CD4-positive, alpha-beta T cell (primary cell): ENCODE measurements at regions of chrX and their contacts with region 1.

Region 1: DNA sequence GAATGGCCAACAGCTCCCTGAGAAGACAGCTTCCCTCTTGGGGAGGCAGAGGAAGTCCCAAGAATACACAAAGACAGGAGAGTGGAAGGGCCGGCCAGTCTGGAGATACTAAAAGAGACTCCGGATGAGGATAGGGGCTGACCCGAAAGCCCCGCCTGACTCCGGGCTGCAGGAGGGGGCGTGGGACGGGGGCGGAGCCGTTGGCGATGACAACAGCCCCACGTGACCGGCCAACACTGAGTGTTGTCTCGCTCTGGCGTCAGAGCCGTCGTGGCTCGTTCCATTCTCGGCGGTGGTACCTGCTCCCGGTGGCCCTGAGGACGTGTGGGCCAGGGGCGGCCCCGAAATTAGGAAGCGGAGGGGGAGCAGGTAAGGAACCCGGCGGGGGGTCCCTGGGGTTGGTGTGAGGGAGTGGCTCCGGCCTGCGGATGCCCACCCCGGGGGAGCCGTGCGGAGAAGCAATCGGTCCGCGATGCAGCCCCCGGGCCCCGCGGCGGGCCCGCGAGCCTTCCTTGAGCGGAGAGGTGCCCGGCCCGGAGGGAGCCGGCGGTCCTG is at the start of gene BEX4:
- DNase-seq: peak; percentile 54 to 90 (median 76)
- ATAC-seq: peak; percentile 87
- H3K4me3 ChIP-seq: peak within 1 kb of the TSS; percentile 65
- H3K4me3 Mint-ChIP-seq: peak within 1 kb of the TSS; percentile 94
- H3K27ac ChIP-seq: peak within 1 kb of the TSS; percentile 73 to 78
- H3K27ac Mint-ChIP-seq: peak within 1 kb of the TSS; percentile 90
- H3K4me1 ChIP-seq: peaks cover 12% of the 10 kb centered on the region
- H3K4me1 Mint-ChIP-seq: peaks cover 13% of the 10 kb centered on the region
- H3K27me3 ChIP-seq: no peaks in the 10 kb centered on the region
- H3K27me3 Mint-ChIP-seq: peaks cover 4% of the 10 kb centered on the region
- CTCF ChIP-seq: no peak
- total RNA-seq, gene BEX4: 60.8 to 61.0 TPM

Region 2: DNA sequence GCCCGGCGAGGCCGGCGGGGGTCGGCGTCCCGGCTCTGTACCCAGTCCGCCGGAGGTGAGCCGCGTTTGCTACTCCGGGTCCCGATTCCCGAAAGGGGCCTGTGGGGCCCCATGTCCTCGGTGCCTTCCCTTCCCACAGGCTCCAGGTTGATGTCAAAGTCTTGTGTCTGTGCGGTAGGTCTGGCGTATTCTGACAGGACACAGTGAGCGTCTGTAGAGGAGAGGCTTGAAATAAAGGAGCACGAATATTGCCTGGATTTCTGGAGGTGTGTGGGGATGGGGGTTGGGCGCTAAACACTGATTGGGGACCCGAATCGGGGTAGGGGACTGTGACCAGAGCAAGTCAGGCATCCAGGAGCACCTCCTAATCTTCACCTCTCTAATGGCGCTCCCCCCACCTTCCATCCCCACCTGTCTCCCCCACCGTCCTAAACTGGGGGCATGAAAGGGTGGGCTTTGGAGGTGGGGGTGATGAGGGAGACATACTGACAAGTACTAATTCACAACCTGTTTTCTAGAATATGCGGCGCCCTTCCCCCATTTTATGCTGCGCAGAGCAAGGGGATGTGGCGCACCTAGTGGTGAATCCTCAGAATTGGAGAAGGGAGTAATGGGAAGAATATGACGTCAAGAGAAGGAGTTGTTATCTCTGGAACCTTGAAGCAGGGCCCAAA is 501.9 kb before region 1 on chrX:
- CTCF ChIA-PET with region 1: no interaction called
- POLR2A ChIA-PET with region 1: no interaction called
- intact Hi-C with region 1: no loop called
- DNase-seq: peak in 4 of 14 experiments; percentile 11 to 38 (median 36)
- ATAC-seq: peak; percentile 64
- H3K4me3 ChIP-seq: peak overlapping the region; percentile 62
- H3K4me3 Mint-ChIP-seq: peak overlapping the region; percentile 93
- H3K27ac ChIP-seq: no peak overlapping the region
- H3K27ac Mint-ChIP-seq: peak overlapping the region; percentile 33
- H3K4me1 ChIP-seq: peaks cover 14% of the 10 kb centered on the region
- H3K4me1 Mint-ChIP-seq: peaks cover 30% of the 10 kb centered on the region
- H3K27me3 ChIP-seq: peaks cover 0 to 5% of the 10 kb centered on the region in 2 experiments
- H3K27me3 Mint-ChIP-seq: peaks cover 11% of the 10 kb centered on the region
- CTCF ChIP-seq: peak; percentile 34

Region 3: DNA sequence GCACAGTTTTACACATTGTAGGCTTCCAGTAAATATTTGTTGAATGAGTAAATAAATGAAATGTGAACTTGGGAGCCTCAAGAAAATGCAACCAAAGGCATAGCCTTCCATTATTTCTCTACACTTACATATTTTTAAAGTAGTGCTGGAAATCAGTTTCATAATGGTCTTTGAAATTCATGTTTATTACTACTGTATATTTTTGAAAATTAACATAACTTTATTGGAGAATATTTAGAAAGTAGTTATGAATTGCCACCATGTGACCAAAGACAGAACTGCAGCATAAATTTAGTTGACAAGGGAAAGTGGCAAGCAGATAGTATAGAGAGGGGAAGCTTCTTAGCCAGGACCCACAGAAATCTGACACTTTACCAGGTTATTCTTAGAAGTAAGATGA is 33.6 kb after region 1 on chrX:
- CTCF ChIA-PET with region 1: interaction called, 8 read pairs
- POLR2A ChIA-PET with region 1: interaction called, 3 read pairs
- intact Hi-C with region 1: loop called (anchors 1 kb)
- DNase-seq: peak in 4 of 14 experiments; percentile 13 to 47 (median 40)
- ATAC-seq: no peak
- H3K4me3 ChIP-seq: no peak overlapping the region
- H3K4me3 Mint-ChIP-seq: no peak overlapping the region
- H3K27ac ChIP-seq: no peak overlapping the region
- H3K27ac Mint-ChIP-seq: no peak overlapping the region
- H3K4me1 ChIP-seq: peaks cover under 1% of the 10 kb centered on the region
- H3K4me1 Mint-ChIP-seq: peaks cover 8% of the 10 kb centered on the region
- H3K27me3 ChIP-seq: no peaks in the 10 kb centered on the region
- H3K27me3 Mint-ChIP-seq: no peaks in the 10 kb centered on the region
- CTCF ChIP-seq: peak; percentile 46

Region 4: DNA sequence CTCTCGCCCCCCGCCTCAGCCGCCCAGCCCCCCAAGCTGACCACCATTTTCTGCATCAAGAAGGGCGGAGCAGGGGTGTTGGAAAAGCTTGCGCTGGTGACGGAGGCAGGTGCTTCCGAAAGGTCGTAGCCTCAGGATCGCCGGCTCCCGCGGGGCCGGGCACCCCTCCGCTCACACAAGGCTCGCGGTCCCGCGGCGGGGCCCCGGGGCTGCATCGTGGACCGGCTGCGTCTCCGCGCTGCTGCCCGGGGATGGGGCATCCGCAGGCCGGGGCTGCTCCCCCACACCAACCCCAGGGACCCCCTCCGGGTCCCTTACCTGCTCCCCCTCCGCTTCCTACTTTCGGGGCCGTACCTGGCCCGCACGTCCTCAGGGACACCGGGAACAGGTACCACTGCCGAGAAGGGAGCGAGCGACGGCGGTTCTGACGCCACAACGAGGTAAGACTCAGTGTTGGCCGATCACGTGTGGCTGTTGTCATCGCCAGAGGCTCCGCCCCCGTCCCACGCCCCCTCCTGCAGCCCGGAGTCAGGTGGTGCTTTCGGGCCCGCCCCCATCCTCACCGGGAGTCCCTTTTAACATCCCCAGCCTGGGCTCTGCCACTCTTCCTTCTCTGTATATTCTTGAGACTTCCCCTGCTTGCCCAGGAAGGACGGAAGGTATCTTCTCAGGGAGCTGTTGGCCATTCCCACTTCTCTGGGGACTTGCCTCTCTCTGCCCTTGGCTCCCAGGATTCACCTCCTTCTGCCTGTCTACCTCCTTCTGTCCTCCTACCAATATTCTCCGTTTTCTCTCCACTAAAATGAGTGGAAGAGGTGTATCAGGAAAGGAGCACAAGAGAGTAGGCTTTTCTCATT is 95.8 kb after region 1 on chrX and contains the start of gene BEX2:
- CTCF ChIA-PET with region 1: no interaction called
- POLR2A ChIA-PET with region 1: no interaction called
- intact Hi-C with region 1: loop called in 1 of 2 experiments (anchors 2 kb)
- DNase-seq: peak; percentile 71 to 92 (median 82)
- ATAC-seq: peak; percentile 99
- H3K4me3 ChIP-seq: peak within 1 kb of the TSS; percentile 63
- H3K4me3 Mint-ChIP-seq: peak within 1 kb of the TSS; percentile 89
- H3K27ac ChIP-seq: peak within 1 kb of the TSS in 1 of 2 donors; percentile 59
- H3K27ac Mint-ChIP-seq: peak within 1 kb of the TSS; percentile 71
- H3K4me1 ChIP-seq: peaks cover 9% of the 10 kb centered on the region
- H3K4me1 Mint-ChIP-seq: no peaks in the 10 kb centered on the region
- H3K27me3 ChIP-seq: no peaks in the 10 kb centered on the region
- H3K27me3 Mint-ChIP-seq: no peaks in the 10 kb centered on the region
- CTCF ChIP-seq: no peak
- total RNA-seq, gene BEX2: 46.4 to 49.3 TPM

Region 5: DNA sequence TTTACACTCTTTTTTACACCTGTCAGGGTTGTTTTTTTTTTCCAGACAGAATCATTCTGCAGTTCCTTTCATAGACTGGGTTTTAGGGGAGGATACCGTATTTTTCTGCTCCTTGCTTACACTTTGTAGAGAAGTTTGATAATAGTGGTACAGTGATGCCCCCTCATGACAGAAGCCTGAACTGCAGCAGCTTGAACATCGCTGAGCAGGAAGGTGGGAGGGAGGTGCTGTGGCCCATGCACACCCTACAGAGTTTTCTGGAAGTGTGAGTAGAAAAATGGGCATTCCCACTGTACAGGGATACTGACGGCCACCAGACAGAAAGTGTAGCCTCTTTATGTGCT is 249.8 kb after region 1 on chrX:
- CTCF ChIA-PET with region 1: interaction called, 15 read pairs
- POLR2A ChIA-PET with region 1: interaction called, 3 read pairs
- intact Hi-C with region 1: loop called (anchors 1 kb)
- DNase-seq: peak; percentile 53 to 86 (median 74)
- ATAC-seq: peak; percentile 95
- H3K4me3 ChIP-seq: peak overlapping the region; percentile 60
- H3K4me3 Mint-ChIP-seq: peak overlapping the region; percentile 90
- H3K27ac ChIP-seq: peak overlapping the region in 1 of 2 donors; percentile 9
- H3K27ac Mint-ChIP-seq: peak overlapping the region; percentile 32
- H3K4me1 ChIP-seq: peaks cover 13% of the 10 kb centered on the region
- H3K4me1 Mint-ChIP-seq: peaks cover 11% of the 10 kb centered on the region
- H3K27me3 ChIP-seq: no peaks in the 10 kb centered on the region
- H3K27me3 Mint-ChIP-seq: no peaks in the 10 kb centered on the region
- CTCF ChIP-seq: peak; percentile 52

Region 6: GRCh38 chrX:103697687-103698086 is 482.7 kb after region 1 on chrX:
- CTCF ChIA-PET with region 1: no interaction called
- POLR2A ChIA-PET with region 1: no interaction called
- intact Hi-C with region 1: loop called in 1 of 2 experiments (anchors 10 kb)
- DNase-seq: no peak
- ATAC-seq: no peak
- H3K4me3 ChIP-seq: no peak overlapping the region
- H3K4me3 Mint-ChIP-seq: no peak overlapping the region
- H3K27ac ChIP-seq: no peak overlapping the region
- H3K27ac Mint-ChIP-seq: no peak overlapping the region
- H3K4me1 ChIP-seq: no peaks in the 10 kb centered on the region
- H3K4me1 Mint-ChIP-seq: no peaks in the 10 kb centered on the region
- H3K27me3 ChIP-seq: no peaks in the 10 kb centered on the region
- H3K27me3 Mint-ChIP-seq: no peaks in the 10 kb centered on the region
- CTCF ChIP-seq: no peak

Region 7: GRCh38 chrX:104165894-104166737 is 951.2 kb after region 1 on chrX and contains the start of gene FAM199X:
- CTCF ChIA-PET with region 1: no interaction called
- POLR2A ChIA-PET with region 1: no interaction called
- intact Hi-C with region 1: loop called in 1 of 2 experiments (anchors 10 kb)
- DNase-seq: peak; percentile 65 to 91 (median 76)
- ATAC-seq: peak; percentile 98
- H3K4me3 ChIP-seq: peak within 1 kb of the TSS; percentile 90
- H3K4me3 Mint-ChIP-seq: peak within 1 kb of the TSS; percentile 96
- H3K27ac ChIP-seq: peak within 1 kb of the TSS; percentile 64 to 69
- H3K27ac Mint-ChIP-seq: peak within 1 kb of the TSS; percentile 92
- H3K4me1 ChIP-seq: peaks cover 13% of the 10 kb centered on the region
- H3K4me1 Mint-ChIP-seq: peaks cover 39% of the 10 kb centered on the region
- H3K27me3 ChIP-seq: no peaks in the 10 kb centered on the region
- H3K27me3 Mint-ChIP-seq: no peaks in the 10 kb centered on the region
- CTCF ChIP-seq: peak; percentile 44
- total RNA-seq, gene FAM199X: 16.4 to 17.1 TPM